ENCODE measurements at regions of chr11 and their contacts with region 1.

Region 1: DNA sequence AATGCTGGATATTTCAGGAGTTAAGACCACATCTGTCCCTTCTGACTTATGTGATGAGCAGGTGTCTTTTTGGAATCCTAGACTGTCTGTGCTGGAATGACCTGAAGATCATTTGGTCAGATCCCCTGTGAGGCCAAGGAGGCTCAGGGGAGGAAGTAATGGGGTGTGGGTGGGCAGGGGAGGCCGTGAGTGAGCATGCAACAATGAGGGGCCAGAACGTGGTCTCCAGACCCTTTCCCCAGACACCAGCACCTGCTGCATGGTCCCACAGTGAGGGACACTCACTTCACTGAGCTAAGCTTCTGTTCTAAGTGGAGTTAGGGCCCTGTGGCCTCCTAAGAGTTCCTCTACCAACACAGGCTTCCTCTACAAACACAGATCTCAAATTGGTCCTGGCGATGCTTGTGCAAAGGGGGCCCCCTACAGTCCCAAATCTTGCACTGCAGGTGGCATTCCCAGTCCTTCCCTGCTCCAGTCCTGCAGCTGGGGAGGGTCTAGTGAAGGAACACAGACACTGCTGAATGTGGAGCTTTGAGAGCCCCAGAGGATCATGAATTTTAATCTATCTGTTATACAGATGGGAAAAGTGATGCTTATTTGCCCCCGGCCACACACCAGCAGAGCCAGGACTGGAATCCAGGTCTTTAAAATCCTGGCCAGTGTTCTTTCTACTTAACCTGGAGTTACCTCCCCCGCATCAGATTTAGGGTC is 7.4 kb downstream of the USP2 start:
- H3K4me3 ChIP-seq: no peak overlapping the region
- H3K27ac ChIP-seq: no peak overlapping the region
- H3K4me1 ChIP-seq: peaks cover 2% of the 10 kb centered on the region; the same call in 1 of the 2 replicates
- CTCF ChIP-seq: peak; percentile 34; the same call in 1 of the 2 replicates

Region 2: GRCh38 chr11:119306373-119306890 is 67.6 kb before region 1 on chr11:
- CTCF ChIA-PET with region 1: interaction called, 20 read pairs
- POLR2A ChIA-PET with region 1: no interaction called
- H3K4me3 ChIP-seq: no peak overlapping the region
- H3K27ac ChIP-seq: no peak overlapping the region
- H3K4me1 ChIP-seq: no peaks in the 10 kb centered on the region
- CTCF ChIP-seq: no peak

Region 3: GRCh38 chr11:119340344-119341221 is 33.5 kb before region 1 on chr11 and contains the start of gene C1QTNF5:
- CTCF ChIA-PET with region 1: interaction called, 160 read pairs
- POLR2A ChIA-PET with region 1: interaction called, 20 read pairs
- H3K4me3 ChIP-seq: peak within 1 kb of the TSS; percentile 26
- H3K27ac ChIP-seq: no peak within 1 kb of the TSS; the same call in 1 of the 2 replicates
- H3K4me1 ChIP-seq: no peaks in the 10 kb centered on the region; the same call in 1 of the 2 replicates
- CTCF ChIP-seq: no peak

Region 4: DNA sequence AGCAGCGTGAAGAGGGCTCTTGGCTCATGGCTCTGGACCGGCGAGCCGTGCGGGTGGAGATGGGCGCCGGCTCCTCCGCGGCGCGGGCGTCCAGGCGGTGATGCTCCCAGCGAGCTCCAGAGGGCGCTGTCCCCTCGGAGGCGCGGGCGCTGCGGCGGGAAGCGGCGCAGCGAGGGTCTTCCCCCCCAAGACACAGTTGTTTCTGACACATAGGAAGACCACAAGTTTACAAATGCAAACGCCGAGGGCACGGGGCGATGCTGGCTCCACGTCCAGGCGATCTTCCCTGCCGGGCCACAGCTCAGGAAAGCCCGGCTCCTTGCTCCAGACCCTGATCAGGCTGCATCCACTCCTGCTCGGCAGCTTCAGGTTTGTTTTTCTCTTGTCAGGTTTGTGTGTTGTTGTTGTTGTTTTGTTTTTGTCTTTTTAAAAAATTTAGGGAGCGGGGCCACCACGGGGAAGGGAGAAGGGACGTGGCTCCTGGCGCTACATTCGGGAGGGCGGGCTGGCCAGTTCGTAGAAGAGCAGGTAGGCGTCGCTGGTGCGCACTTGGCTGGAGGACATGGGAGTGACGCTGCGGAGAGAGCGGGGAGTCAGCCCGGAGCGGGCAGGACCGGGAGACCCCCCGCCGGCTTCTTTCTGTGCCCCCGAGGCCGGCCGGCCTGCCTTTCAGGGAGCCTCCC is 17.6 kb before region 1 on chr11:
- CTCF ChIA-PET with region 1: interaction called, 35 read pairs
- POLR2A ChIA-PET with region 1: interaction called, 8 read pairs
- H3K4me3 ChIP-seq: no peak overlapping the region
- H3K27ac ChIP-seq: no peak overlapping the region
- H3K4me1 ChIP-seq: no peaks in the 10 kb centered on the region; the same call in 1 of the 2 replicates
- CTCF ChIP-seq: no peak

Region 5: GRCh38 chr11:119363851-119364590 is 10.1 kb before region 1 on chr11:
- CTCF ChIA-PET with region 1: interaction called, 33 read pairs
- POLR2A ChIA-PET with region 1: interaction called, 8 read pairs
- H3K4me3 ChIP-seq: peak overlapping the region; percentile 32
- H3K27ac ChIP-seq: no peak overlapping the region; the same call in 1 of the 2 replicates
- H3K4me1 ChIP-seq: peaks cover 9% of the 10 kb centered on the region
- CTCF ChIP-seq: no peak

Region 6: DNA sequence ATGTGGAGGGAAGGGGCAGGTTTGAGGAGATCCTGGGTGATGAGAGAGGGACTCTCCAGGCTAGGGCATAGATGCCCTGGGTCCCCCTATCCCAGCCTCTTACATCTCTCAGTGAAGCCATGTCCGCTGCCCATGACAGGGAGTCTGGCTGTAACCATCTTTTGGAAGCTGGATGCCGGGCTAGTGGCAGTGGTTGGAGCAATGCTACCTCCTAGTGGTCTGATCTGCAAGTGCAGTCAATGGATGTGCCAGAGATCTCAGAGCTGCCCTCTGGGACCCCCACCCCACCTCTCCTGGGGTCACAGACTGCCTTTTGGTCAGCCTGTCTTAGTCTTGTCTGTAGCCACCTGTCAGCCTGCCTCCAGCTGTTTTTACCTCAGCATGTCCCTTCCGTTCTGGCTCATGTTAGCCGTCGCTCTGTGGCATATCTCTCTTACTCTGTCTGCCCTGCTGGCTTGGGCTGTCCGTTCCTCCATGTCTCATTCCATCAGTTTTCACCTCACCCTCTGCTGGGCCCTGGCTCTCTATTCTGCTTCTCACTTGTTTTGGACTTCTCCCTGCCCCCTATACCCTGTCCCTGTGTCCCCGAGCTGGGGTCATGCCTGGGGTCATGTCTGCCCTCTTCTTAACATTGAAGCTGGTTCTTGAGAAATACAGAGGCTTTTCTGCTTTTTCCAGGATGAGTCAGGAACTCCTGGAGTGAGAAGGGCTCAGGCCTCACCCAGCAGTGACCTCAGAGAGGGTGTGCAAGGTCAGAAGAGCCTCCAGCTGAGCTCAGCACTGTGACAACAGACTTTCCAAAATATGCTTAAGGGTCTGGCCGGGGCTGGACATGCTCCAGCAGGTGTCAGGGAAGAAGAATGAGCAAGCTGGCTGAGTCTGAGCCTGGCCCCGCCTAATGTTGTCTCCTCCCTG is 100.9 kb after region 1 on chr11:
- CTCF ChIA-PET with region 1: interaction called, 14 read pairs
- POLR2A ChIA-PET with region 1: interaction called, 4 read pairs
- H3K4me3 ChIP-seq: no peak overlapping the region
- H3K27ac ChIP-seq: no peak overlapping the region
- H3K4me1 ChIP-seq: no peaks in the 10 kb centered on the region
- CTCF ChIP-seq: peak; percentile 74